RWPE1 (cell line): ENCODE measurements at regions of chr19 and their contacts with region 1.

Region 1: DNA sequence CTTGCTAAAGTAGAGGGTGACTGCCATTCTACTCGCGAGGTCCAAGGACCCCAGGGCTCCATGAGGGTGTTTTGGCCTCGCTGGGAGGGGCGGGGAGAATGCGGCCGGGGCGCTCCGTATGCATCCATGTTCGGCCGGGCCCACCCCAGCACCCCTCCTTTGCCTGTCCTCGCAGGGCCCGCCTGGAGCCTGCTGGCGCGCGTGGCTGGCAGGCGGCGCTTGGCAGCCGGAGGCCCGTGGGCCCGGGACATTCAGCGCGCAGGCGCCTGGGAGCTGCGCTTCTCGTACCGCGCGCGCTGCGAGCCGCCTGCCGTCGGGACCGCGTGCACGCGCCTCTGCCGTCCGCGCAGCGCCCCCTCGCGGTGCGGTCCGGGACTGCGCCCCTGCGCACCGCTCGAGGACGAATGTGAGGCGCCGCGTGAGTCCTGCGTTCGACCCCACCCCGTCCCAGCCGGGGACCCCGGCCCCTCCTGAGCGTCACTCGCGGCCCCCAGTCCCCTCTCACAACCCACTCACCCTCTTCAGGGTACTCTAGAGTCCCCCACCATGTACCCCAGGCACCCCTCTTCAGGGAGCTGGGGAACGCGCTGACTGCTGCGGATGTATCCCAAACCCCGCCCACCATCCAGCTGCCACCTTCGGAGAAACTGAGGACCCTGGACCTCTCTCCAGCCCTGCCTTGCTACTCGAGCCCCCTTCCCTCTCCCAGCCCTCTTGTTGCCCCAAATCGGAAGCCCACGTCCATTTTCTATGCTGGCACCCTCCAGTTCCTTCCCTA is 4.1 kb downstream of the DLL3 start:
- DNase-seq: peak; percentile 57
- H3K27ac ChIP-seq: no peak overlapping the region
- CTCF ChIP-seq: peak; percentile 87

Region 2: GRCh38 chr19:39467941-39468340 is 34.9 kb before region 1 on chr19:
- CTCF ChIA-PET with region 1: interaction called, 10 read pairs
- POLR2A ChIA-PET with region 1: no interaction called
- DNase-seq: no peak
- H3K27ac ChIP-seq: no peak overlapping the region
- CTCF ChIP-seq: no peak

Region 3: DNA sequence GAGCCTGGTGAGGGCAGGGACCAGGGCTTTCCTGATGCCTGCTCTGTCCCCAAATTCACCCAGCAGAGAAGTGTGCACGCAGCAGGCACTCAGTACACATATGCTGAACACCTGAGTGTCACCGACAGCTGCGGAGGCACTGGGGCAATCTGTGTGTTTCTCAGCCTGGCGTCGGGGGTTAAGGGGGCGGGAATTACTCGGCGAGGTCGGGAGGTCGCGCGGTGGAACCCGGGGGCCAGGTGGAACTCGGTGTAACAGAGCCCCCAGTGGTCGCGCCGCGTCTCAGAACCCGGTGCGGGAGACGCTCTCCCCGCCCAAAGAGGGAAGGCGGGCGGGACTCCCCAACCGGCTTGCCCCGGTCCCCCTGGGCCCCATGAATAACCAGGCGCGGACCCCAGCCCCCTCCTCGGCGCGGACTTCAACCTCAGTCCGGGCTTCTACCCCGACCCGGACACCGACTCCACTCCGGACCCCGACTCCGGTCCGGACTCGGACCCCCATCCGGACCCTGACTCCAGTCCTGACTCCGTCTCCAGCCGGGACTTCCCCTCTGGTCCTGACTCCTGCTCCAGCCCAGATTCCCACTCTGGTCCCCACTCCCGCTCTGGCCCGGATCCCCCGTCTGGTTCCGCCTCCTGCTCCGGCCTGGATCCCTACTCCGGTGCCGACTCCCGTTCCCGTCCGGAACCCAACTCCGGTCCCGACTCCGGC is 12.2 kb after region 1 on chr19 and contains the start of gene SELENOV:
- CTCF ChIA-PET with region 1: interaction called, 12 read pairs
- POLR2A ChIA-PET with region 1: no interaction called
- DNase-seq: no peak
- H3K27ac ChIP-seq: no peak within 1 kb of the TSS
- CTCF ChIP-seq: no peak

Region 4: GRCh38 chr19:39532233-39533002 is 29.6 kb after region 1 on chr19 and contains the start of gene EID2B:
- CTCF ChIA-PET with region 1: interaction called, 14 read pairs
- POLR2A ChIA-PET with region 1: no interaction called
- DNase-seq: peak; percentile 96
- H3K27ac ChIP-seq: peak within 1 kb of the TSS; percentile 79
- CTCF ChIP-seq: peak; percentile 97

Region 5: DNA sequence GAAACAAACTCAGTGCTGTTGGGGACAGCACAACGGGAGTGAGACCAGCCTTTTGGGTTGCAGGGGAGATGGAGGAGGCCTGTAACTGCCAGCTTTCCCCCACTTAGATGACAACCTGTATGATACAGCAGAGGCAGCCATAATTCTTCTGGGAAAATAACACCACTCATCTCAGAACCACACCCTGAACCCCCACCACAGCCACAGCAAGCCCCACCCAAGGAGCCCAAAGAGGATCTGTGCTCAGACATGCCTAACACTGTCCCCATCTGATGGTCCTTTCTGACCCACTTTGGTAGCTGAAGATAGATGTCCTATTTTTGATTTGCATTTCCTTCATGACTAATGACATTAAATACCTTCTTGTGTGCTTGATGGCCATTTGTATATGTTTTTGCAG is 114.9 kb after region 1 on chr19:
- CTCF ChIA-PET with region 1: no interaction called
- POLR2A ChIA-PET with region 1: no interaction called
- DNase-seq: no peak
- H3K27ac ChIP-seq: no peak overlapping the region
- CTCF ChIP-seq: no peak